Aorta (tissue), 5 donors: ENCODE measurements at regions of chr12 and their contacts with region 1.

Region 1: GRCh38 chr12:101076921-101077320 is 133.1 kb downstream of the SLC5A8 start:
- DNase-seq: peak in 1 of 2 donors; percentile 74
- ATAC-seq: peak; percentile 76
- H3K4me3 ChIP-seq: no peak overlapping the region
- H3K27ac ChIP-seq: peak overlapping the region; percentile 34 to 77
- H3K4me1 ChIP-seq: peaks cover 4 to 10% of the 10 kb centered on the region in 2 donors
- H3K27me3 ChIP-seq: no peaks in the 10 kb centered on the region

Region 2: DNA sequence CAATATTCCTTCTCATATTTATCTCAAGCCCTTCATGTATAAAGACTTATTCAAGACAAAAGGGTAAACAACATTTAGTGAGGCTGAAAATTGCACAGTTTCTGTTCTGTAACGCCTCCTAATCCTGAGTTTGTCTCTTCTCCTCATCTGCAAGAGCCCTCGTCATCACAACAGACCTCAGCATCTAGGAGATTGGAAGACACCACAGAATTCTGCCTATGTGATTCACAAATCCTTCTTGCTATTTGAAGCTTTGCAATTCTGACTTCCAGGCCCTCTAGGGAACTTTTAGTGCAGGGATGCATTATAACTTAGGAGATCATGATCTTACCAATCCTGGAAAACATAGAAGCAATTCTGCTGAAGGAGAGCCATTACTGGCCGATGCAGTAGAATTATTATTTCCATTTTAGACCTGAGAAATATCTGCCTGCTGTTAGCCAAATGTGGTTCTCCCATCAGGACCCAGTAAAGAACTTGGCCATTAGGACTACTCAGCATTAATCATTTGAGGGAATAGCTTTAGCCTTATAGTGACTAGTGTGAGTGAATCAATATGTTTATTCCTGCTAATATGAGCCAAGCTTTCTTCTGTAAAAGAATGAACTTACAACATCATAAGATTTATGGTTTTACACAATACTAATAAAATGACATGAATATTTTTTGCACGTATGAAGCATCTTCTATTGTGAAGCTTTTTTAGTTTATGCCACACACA is 162.9 kb before region 1 on chr12:
- intact Hi-C with region 1: loop called in 1 of 2 experiments (anchors 5 kb)
- DNase-seq: no peak
- ATAC-seq: no peak
- H3K4me3 ChIP-seq: no peak overlapping the region
- H3K27ac ChIP-seq: no peak overlapping the region
- H3K4me1 ChIP-seq: peaks cover 0 to 3% of the 10 kb centered on the region in 2 donors
- H3K27me3 ChIP-seq: no peaks in the 10 kb centered on the region

Region 3: GRCh38 chr12:100955139-100955538 is 121.8 kb before region 1 on chr12:
- intact Hi-C with region 1: loop called in 1 of 2 experiments (anchors 10 kb)
- DNase-seq: peak; percentile 72 to 75
- ATAC-seq: no peak
- H3K4me3 ChIP-seq: no peak overlapping the region
- H3K27ac ChIP-seq: peak overlapping the region in 1 of 2 donors; percentile 20
- H3K4me1 ChIP-seq: peaks cover 0 to 6% of the 10 kb centered on the region in 2 donors
- H3K27me3 ChIP-seq: no peaks in the 10 kb centered on the region

Region 4: GRCh38 chr12:100987552-100988521 is 89.1 kb before region 1 on chr12:
- intact Hi-C with region 1: loop called in 1 of 2 experiments (anchors 2 kb)
- DNase-seq: peak; percentile 59 to 71
- ATAC-seq: no peak
- H3K4me3 ChIP-seq: no peak overlapping the region
- H3K27ac ChIP-seq: peak overlapping the region in 1 of 2 donors; percentile 48
- H3K4me1 ChIP-seq: peaks cover 6 to 8% of the 10 kb centered on the region in 2 donors
- H3K27me3 ChIP-seq: peaks cover 0 to 2% of the 10 kb centered on the region in 2 donors

Region 5: DNA sequence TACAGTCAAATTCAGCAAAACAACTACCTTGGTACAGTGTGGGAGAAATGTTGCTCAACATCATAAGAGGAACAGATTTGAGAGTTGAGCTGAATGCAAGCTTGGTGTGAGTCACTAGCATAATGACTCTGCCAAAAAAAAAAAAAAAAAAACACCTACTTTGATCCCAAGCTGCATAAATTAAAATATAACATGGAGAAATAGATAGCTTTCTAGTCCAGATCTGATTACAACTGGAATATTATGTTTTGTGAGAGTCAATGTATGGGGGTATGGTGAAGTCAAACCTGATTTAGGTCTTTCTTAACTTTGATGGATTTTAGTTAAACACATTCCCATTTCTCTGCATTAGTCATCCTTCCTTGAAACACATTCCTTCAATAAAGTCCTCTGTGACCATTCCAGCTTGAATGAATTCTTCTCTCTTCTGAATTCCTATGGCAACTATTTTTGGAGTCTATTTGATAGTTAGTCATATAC is 55.0 kb before region 1 on chr12:
- intact Hi-C with region 1: loop called in 1 of 2 experiments (anchors 1 kb)
- DNase-seq: no peak
- ATAC-seq: peak; percentile 75
- H3K4me3 ChIP-seq: no peak overlapping the region
- H3K27ac ChIP-seq: no peak overlapping the region
- H3K4me1 ChIP-seq: no peaks in the 10 kb centered on the region
- H3K27me3 ChIP-seq: no peaks in the 10 kb centered on the region